ENCODE measurements at regions of chr6 and their contacts with region 1.

Region 1: GRCh38 chr6:50816115-50816675 is 2.5 kb upstream of the TFAP2B start:
- DNase-seq: peak; percentile 88
- H3K4me3 ChIP-seq: peak overlapping the region; percentile 51
- H3K27ac ChIP-seq: no peak overlapping the region
- H3K4me1 ChIP-seq: peaks cover 13% of the 10 kb centered on the region
- H3K27me3 ChIP-seq: peaks cover 72% of the 10 kb centered on the region
- CTCF ChIP-seq: peak; percentile 87

Region 2: GRCh38 chr6:51541847-51542246 is 725.7 kb after region 1 on chr6:
- CTCF ChIA-PET with region 1: no interaction called
- POLR2A ChIA-PET with region 1: no interaction called
- intact Hi-C with region 1: loop called (anchors 1 kb)
- DNase-seq: peak; percentile 58
- H3K4me3 ChIP-seq: no peak overlapping the region
- H3K27ac ChIP-seq: no peak overlapping the region
- H3K4me1 ChIP-seq: no peaks in the 10 kb centered on the region
- H3K27me3 ChIP-seq: peaks cover 12% of the 10 kb centered on the region
- CTCF ChIP-seq: peak; percentile 32; the same call in 1 of the 2 replicates

Region 3: GRCh38 chr6:51844336-51844735 is 1028.1 kb after region 1 on chr6:
- CTCF ChIA-PET with region 1: no interaction called
- POLR2A ChIA-PET with region 1: no interaction called
- intact Hi-C with region 1: loop called (anchors 5 kb)
- DNase-seq: peak; percentile 76
- H3K4me3 ChIP-seq: no peak overlapping the region
- H3K27ac ChIP-seq: no peak overlapping the region
- H3K4me1 ChIP-seq: peaks cover 11% of the 10 kb centered on the region
- H3K27me3 ChIP-seq: peaks cover 11% of the 10 kb centered on the region
- CTCF ChIP-seq: peak; percentile 62

Region 4: DNA sequence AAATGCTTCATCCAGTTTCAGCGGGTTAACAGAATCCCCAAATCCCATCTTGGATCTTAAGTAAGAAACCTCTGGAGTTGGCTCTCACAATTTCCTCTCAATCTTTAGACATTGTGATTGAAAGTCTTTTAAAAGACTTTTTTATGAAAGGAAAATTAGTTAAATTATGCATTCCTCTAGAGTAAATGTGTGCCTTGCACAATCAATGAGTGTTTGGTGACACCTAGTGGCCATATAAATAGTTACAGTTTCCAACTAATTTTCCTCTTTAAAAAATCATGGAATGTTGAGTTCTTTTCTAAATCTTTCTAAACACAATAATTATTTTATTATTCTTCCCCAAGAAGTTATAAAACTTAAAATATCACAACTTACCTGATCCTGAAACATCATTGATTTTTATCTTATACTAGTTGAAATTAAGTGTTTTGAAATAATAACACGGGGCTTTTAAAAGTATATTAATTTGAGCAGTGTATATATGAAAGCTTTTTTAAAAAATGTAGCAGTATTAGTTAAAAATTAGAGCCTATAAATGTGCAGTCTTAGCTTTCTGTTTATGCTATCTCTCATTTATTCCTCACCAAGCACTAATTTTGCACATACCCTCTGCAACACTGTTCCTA is 1204.9 kb after region 1 on chr6:
- CTCF ChIA-PET with region 1: no interaction called
- POLR2A ChIA-PET with region 1: no interaction called
- intact Hi-C with region 1: loop called (anchors 5 kb)
- DNase-seq: peak; percentile 55
- H3K4me3 ChIP-seq: no peak overlapping the region
- H3K27ac ChIP-seq: no peak overlapping the region
- H3K4me1 ChIP-seq: no peaks in the 10 kb centered on the region
- H3K27me3 ChIP-seq: no peaks in the 10 kb centered on the region
- CTCF ChIP-seq: peak; percentile 80

Measured in A673 (cell line).